Heart left ventricle (tissue), 16 donors: ENCODE measurements at regions of chr2 and their contacts with region 1.

Region 1: GRCh38 chr2:202375609-202376408 is at the start of gene BMPR2:
- DNase-seq: peak; percentile 91 to 94 (median 92)
- ATAC-seq: peak; percentile 79 to 93 (median 88)
- H3K4me3 ChIP-seq: peak within 1 kb of the TSS; percentile 64 to 99 (median 85)
- H3K27ac ChIP-seq: peak within 1 kb of the TSS; percentile 92 to 100 (median 98)
- H3K4me1 ChIP-seq: peaks cover 0 to 40% (median 11%) of the 10 kb centered on the region in 12 donors
- H3K27me3 ChIP-seq: no peaks in the 10 kb centered on the region
- CTCF ChIP-seq: no peak
- POLR2A ChIP-seq: peak in 1 of 2 donors; percentile 83
- total RNA-seq, gene BMPR2: 44.4 to 81.9 (median 66.1) TPM

Region 2: GRCh38 chr2:202149155-202149762 is 226.6 kb before region 1 on chr2:
- intact Hi-C with region 1: no loop called
- DNase-seq: peak in 4 of 5 donors; percentile 29 to 71 (median 50)
- ATAC-seq: peak in 3 of 4 donors; percentile 64 to 82 (median 68)
- H3K4me3 ChIP-seq: no peak overlapping the region
- H3K27ac ChIP-seq: peak overlapping the region in 6 of 12 donors; percentile 12 to 68 (median 40)
- H3K4me1 ChIP-seq: peaks cover 0 to 30% (median 5%) of the 10 kb centered on the region in 12 donors
- H3K27me3 ChIP-seq: no peaks in the 10 kb centered on the region
- CTCF ChIP-seq: no peak
- POLR2A ChIP-seq: no peak

Region 3: GRCh38 chr2:202265467-202266277 is 110.1 kb before region 1 on chr2 and contains the start of gene NOP58:
- intact Hi-C with region 1: loop called in 2 of 10 experiments (anchors 5 to 10 kb)
- DNase-seq: peak; percentile 91 to 94 (median 92)
- ATAC-seq: peak; percentile 99
- H3K4me3 ChIP-seq: peak within 1 kb of the TSS; percentile 48 to 98 (median 80)
- H3K27ac ChIP-seq: peak within 1 kb of the TSS; percentile 90 to 99 (median 97)
- H3K4me1 ChIP-seq: peaks cover 0 to 46% (median 17%) of the 10 kb centered on the region in 12 donors
- H3K27me3 ChIP-seq: no peaks in the 10 kb centered on the region
- CTCF ChIP-seq: no peak
- POLR2A ChIP-seq: peak in 1 of 2 donors; percentile 93
- total RNA-seq, gene NOP58: 12.9 to 26.6 (median 21.3) TPM

Region 4: DNA sequence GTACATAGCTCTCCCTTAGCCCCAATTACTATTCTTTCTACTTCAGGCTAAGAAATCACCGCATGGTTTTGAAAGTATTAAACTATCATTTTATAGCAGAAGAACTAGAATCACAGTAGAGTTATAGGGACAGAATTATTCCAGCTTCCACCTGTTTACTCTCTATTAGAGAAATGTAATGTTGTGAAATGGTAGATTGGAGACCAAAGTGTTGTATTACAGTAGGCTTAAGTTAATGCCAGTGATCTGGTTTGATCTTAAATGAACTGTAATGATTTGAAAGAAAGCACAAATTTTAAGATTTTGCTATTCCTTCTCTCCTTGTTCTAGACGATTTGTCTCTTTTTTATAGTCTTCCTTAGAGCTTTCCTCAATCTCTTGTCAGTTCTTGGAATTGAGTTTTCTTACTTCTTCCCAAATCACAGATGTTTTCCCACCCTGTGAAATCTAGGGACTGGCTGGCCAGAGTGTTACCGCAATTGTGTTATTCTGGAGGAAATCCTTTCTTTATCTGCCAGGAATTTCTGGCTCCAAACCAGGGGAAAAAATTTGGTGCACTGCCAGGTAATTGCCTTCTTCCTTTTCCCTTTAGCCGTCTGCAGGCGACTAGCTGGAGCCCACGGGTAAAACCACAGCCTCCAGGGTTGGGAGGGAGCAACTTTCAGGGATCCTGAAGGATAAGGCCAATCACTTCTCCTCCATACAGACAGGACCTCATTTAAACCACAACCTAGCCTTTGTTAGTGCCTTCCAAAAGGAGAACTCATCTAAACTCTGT is 58.5 kb before region 1 on chr2:
- intact Hi-C with region 1: loop called in 9 of 10 experiments (anchors 1 to 10 kb)
- DNase-seq: peak in 4 of 5 donors; percentile 64 to 84 (median 79)
- ATAC-seq: peak; percentile 79 to 92 (median 87)
- H3K4me3 ChIP-seq: no peak overlapping the region
- H3K27ac ChIP-seq: peak overlapping the region in 9 of 12 donors; percentile 22 to 78 (median 53)
- H3K4me1 ChIP-seq: peaks cover 0 to 24% (median 17%) of the 10 kb centered on the region in 12 donors
- H3K27me3 ChIP-seq: no peaks in the 10 kb centered on the region
- CTCF ChIP-seq: no peak
- POLR2A ChIP-seq: no peak

Region 5: GRCh38 chr2:202429164-202429980 is 53.6 kb after region 1 on chr2:
- intact Hi-C with region 1: loop called in 3 of 10 experiments (anchors 5 to 10 kb)
- DNase-seq: no peak
- ATAC-seq: peak; percentile 38 to 81 (median 63)
- H3K4me3 ChIP-seq: no peak overlapping the region
- H3K27ac ChIP-seq: peak overlapping the region in 11 of 12 donors; percentile 22 to 64 (median 39)
- H3K4me1 ChIP-seq: peaks cover 0 to 53% (median 19%) of the 10 kb centered on the region in 12 donors
- H3K27me3 ChIP-seq: no peaks in the 10 kb centered on the region
- CTCF ChIP-seq: no peak
- POLR2A ChIP-seq: no peak

Region 6: GRCh38 chr2:202486351-202486750 is 110.5 kb after region 1 on chr2:
- intact Hi-C with region 1: loop called in 4 of 10 experiments (anchors 5 to 10 kb)
- DNase-seq: no peak
- ATAC-seq: no peak
- H3K4me3 ChIP-seq: no peak overlapping the region
- H3K27ac ChIP-seq: no peak overlapping the region
- H3K4me1 ChIP-seq: peaks cover 0 to 19% (median 9%) of the 10 kb centered on the region in 12 donors
- H3K27me3 ChIP-seq: no peaks in the 10 kb centered on the region
- CTCF ChIP-seq: no peak
- POLR2A ChIP-seq: no peak

Region 7: DNA sequence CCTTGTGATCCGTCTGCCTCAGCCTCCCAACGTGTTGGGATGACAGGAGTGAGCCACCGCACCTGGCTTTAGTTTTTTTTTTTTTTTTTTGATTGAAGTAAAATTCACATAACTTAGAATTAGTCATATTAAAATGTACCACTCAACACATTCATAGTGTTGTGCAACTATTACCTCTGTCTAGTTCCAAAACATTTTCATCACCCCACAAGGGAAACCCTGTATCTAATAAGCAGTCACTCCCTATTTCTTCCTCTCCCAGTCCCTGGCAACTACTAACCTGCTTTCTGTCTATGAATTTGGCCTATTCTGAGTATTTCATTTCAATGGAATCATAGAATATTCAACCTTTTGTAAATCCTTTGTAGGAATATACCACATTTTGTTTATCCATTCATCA is 135.1 kb after region 1 on chr2:
- intact Hi-C with region 1: loop called in 2 of 10 experiments (anchors 10 kb)
- DNase-seq: no peak
- ATAC-seq: peak; percentile 42 to 73 (median 62)
- H3K4me3 ChIP-seq: no peak overlapping the region
- H3K27ac ChIP-seq: no peak overlapping the region
- H3K4me1 ChIP-seq: no peaks in the 10 kb centered on the region
- H3K27me3 ChIP-seq: no peaks in the 10 kb centered on the region
- CTCF ChIP-seq: no peak
- POLR2A ChIP-seq: no peak

Region 8: GRCh38 chr2:203014456-203015199 is 638.8 kb after region 1 on chr2 and contains the start of gene NBEAL1:
- intact Hi-C with region 1: loop called in 1 of 10 experiments (anchors 10 kb)
- DNase-seq: peak; percentile 98 to 99 (median 98)
- ATAC-seq: peak; percentile 98
- H3K4me3 ChIP-seq: peak within 1 kb of the TSS; percentile 78 to 94 (median 87)
- H3K27ac ChIP-seq: peak within 1 kb of the TSS; percentile 90 to 99 (median 95)
- H3K4me1 ChIP-seq: peaks cover 0 to 46% (median 21%) of the 10 kb centered on the region in 12 donors
- H3K27me3 ChIP-seq: no peaks in the 10 kb centered on the region
- CTCF ChIP-seq: no peak
- POLR2A ChIP-seq: peak in 1 of 2 donors; percentile 71
- total RNA-seq, gene NBEAL1: 14.7 to 26.9 (median 18.9) TPM